ENCODE measurements at regions of chr15 and their contacts with region 1.

Region 1: DNA sequence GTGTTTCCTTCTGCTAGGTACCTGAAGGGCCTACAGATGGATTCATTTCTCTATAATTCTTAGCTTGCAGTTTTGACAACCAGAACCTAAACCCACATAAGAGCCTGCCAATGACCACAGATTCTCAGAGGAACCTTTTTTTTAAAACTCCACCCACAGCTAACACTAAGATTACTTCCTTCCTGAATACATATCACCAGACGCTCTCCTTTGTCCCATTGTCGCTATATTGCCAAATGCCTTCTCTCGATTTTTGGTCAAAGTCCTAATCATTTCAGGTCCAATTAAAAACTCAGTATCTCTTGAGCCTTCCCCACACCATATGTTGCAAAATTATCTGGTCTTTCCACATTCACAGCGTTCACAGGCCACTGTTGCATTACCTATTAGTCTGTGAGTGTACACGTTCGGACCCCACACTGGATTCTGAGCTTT is 12.4 kb downstream of the ZNF710 start:
- DNase-seq: peak; percentile 81
- H3K4me3 Mint-ChIP-seq: peak overlapping the region; percentile 67
- H3K27ac Mint-ChIP-seq: peak overlapping the region; percentile 87
- H3K4me1 Mint-ChIP-seq: peaks cover 61% of the 10 kb centered on the region
- H3K27me3 Mint-ChIP-seq: no peaks in the 10 kb centered on the region

Region 2: DNA sequence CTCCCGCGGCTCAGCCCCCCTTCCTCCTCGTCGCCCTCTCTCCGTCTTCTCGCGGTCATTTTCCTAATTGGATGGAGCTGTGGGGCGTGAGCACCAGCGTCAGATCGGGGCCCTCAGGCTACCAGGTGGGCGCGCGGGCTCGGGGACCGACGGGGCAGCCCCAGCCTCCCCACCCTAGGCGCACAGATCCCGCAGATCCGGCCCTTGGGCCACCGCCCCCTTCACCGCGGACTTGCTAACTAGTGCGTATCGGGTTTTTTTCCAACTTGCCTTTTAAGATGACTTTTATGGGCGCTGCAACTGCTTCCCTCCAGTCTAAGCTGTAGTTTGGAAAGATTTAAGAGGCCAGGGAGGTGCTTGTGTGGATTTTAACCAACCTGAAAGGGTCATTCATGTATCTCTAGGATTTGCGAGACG is 11.1 kb before region 1 on chr15:
- CTCF ChIA-PET with region 1: interaction called, 11 read pairs
- POLR2A ChIA-PET with region 1: interaction called, 3 read pairs
- DNase-seq: peak; percentile 40
- H3K4me3 Mint-ChIP-seq: peak overlapping the region; percentile 81
- H3K27ac Mint-ChIP-seq: peak overlapping the region; percentile 89
- H3K4me1 Mint-ChIP-seq: peaks cover 61% of the 10 kb centered on the region
- H3K27me3 Mint-ChIP-seq: no peaks in the 10 kb centered on the region

Measured in activated CD4-positive, alpha-beta T cell treated with anti-CD3 and anti-CD28 coated beads, Interleukin-2, amount 10 ng/mL, durations not matched to agents 7 days and 5 days (primary cell).